ENCODE measurements at regions of chr10 and their contacts with region 1.

Region 1: DNA sequence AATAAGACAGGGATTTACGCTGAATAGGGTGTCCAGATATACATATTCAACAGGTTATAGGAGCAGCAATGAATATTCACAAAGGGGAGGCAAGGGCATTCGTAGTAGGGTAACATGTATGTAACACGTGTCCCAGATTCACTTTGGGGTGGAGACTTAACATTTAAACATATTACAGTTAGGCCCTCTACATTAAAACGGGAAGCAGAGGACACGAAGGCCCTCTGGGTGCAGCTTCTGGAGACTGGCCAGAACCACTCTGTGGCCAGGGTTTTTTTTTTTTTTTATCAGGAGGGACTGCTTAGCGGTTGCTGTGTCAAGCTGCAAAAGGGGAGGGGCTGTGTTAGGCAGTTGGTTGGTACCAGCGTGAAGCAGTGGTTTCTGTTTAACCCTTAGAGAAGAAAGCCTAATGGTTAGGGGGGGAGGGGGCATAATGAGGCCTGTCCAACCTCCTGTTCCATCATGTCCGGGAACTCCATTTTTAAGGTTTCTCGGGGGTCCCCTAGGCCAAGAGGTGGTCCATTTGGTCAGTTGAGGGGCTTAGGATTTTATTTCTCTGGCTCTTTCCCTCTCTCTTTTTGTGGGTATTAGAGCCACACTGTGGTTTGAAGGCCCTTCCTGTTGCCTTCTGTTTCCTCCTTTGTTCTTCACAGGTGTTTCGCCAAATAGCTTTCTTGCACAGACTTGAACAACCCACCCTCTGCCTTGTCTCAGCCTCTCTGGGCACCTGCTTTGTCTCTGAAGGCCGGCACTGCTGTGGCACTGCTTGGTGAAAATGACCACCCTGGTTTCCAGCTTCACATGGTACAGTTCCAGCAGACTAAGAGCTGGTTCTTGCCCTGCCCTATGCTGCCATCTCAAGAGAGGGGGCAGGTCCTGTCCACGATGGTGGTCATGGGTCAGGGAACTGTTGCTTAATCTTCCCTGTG is 26.4 kb downstream of the PRF1 start:
- DNase-seq: peak; percentile 68
- H3K4me3 Mint-ChIP-seq: peak overlapping the region; percentile 33
- H3K27ac Mint-ChIP-seq: peak overlapping the region; percentile 94
- H3K4me1 Mint-ChIP-seq: peaks cover 50% of the 10 kb centered on the region
- H3K27me3 Mint-ChIP-seq: no peaks in the 10 kb centered on the region

Region 2: GRCh38 chr10:70296406-70296899 is 279.7 kb before region 1 on chr10:
- intact Hi-C with region 1: no loop called
- DNase-seq: no peak
- H3K4me3 Mint-ChIP-seq: no peak overlapping the region
- H3K27ac Mint-ChIP-seq: no peak overlapping the region
- H3K4me1 Mint-ChIP-seq: peaks cover 1% of the 10 kb centered on the region
- H3K27me3 Mint-ChIP-seq: no peaks in the 10 kb centered on the region

Region 3: DNA sequence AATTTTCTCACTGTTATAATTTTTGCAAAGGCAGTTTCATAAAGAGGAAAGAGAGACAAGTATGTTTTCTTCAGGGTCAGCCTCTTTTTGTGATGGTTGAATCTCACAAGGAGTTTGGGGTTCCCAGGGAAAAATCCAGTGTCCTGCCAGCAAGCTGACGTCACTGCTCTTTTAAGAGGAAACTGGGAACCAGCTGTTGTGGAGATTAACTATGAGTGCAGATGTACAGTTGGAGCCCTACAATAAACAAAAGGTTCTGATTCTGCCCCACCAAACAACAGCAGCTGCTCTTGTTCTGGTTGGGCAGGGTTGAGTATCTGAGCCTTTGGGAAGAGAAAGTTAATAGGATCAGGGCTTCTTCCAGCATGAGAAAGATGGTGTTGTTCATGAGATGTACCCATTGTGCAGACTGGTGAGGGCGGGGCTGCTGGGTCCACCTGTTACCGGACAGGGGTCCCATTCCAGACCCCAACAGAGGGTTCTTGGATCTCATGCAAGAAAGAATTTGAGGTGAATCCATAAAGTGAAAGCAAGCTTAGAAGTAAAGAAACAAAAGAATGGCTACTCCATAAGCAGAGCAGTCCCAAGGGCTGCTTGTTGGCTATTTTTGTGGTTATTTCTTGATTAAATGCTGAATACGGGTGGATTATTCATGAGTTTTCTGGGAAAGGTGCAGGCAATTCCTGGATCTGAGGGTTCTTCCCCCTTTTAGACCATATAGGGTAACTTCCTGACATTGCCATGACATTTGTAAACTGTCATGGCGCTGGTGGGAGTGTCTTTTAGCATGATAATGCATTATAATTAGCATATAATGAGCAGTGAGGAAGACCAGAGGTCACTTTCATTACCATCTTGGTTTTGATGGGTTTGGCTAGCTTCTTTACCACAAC is 13.9 kb after region 1 on chr10:
- intact Hi-C with region 1: loop called (anchors 1 kb)
- DNase-seq: no peak
- H3K4me3 Mint-ChIP-seq: no peak overlapping the region
- H3K27ac Mint-ChIP-seq: no peak overlapping the region
- H3K4me1 Mint-ChIP-seq: peaks cover 44% of the 10 kb centered on the region
- H3K27me3 Mint-ChIP-seq: peaks cover 6% of the 10 kb centered on the region

Region 4: GRCh38 chr10:70613941-70614340 is 37.8 kb after region 1 on chr10:
- intact Hi-C with region 1: loop called (anchors 1 kb)
- DNase-seq: no peak
- H3K4me3 Mint-ChIP-seq: no peak overlapping the region
- H3K27ac Mint-ChIP-seq: peak overlapping the region; percentile 71
- H3K4me1 Mint-ChIP-seq: peaks cover 53% of the 10 kb centered on the region
- H3K27me3 Mint-ChIP-seq: no peaks in the 10 kb centered on the region

Region 5: GRCh38 chr10:70656489-70656888 is 80.4 kb after region 1 on chr10:
- intact Hi-C with region 1: loop called (anchors 1 kb)
- DNase-seq: peak; percentile 76
- H3K4me3 Mint-ChIP-seq: peak overlapping the region; percentile 55
- H3K27ac Mint-ChIP-seq: peak overlapping the region; percentile 77
- H3K4me1 Mint-ChIP-seq: peaks cover 18% of the 10 kb centered on the region
- H3K27me3 Mint-ChIP-seq: peaks cover 14% of the 10 kb centered on the region

Region 6: DNA sequence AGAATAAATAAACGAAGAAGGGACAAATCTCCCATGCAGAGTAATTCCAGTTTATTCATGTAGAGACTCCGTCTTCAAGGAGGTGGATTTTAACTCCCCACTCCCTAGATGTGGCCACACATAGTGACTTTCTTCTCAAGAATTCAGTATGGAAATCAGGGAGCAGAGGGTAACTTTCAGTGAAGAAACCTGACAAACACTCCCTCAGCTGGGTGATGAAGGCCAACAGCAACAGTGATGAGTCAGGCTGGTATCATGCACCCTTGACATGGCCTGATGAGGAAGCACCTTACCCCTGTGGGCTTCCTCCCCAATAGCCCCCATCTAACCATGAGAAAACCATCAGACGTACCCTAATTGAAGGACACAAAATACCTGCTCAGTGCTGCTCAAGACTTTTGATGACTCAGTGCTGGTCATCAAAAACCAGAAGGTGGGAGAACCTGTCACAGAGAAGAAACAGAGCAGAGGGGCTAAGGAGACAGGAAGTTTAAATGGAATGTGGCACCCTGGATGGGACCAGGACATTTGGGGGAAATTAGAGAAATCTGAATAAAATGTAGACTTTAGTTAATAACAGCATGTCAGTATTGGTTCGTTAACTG is 146.8 kb after region 1 on chr10:
- intact Hi-C with region 1: no loop called
- DNase-seq: no peak
- H3K4me3 Mint-ChIP-seq: no peak overlapping the region
- H3K27ac Mint-ChIP-seq: no peak overlapping the region
- H3K4me1 Mint-ChIP-seq: no peaks in the 10 kb centered on the region
- H3K27me3 Mint-ChIP-seq: peaks cover 3% of the 10 kb centered on the region

Region 7: DNA sequence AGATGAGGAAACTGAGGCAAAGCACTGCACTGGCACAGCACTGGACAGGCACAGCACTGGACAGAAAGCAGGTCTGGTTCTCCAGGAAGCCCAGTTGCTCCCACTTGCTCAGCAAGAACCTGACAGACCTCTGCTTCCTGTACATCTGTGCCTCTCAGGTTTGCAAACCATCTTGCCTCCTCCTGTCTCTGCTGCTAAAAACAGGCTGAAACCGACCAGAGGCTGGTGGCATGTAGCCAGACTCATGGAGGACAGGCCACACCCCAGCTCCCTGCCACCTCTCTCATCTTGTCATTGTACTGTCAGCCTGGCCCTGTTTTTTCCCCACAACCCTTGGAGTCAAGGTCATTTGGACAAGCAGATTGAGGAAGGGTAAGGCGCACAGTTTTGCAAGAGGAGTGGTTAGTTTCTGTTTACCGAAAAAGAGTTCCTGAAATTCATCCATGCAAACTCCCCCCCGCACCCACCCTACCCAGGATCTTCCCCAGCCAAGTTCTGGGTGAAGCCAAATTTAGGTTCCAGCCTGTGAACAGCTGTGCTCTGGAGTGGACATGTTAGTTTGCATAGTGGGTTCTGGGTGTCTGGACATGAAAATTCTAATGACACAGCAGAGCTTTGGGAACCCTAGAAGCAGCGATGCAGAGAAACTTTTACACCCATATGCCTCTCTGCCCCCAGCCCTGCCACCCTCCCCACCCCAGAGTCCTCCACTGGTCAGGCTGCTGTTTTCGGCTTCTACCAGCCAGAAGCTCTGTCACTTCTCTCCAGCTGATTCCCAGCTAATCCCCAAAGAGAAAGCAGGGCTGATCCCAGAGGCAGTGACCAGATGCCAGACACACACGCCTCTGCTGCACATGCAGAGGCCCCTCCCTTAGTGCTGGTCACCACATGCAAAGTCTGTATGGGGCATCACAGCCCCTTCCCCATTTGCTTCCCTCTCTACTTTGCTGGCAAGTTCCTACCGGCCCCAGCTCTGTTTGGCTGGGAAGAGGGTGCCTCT is 1151.9 kb after region 1 on chr10:
- intact Hi-C with region 1: loop called (anchors 10 kb)
- DNase-seq: peak; percentile 86
- H3K4me3 Mint-ChIP-seq: peak overlapping the region; percentile 78
- H3K27ac Mint-ChIP-seq: peak overlapping the region; percentile 98
- H3K4me1 Mint-ChIP-seq: peaks cover 69% of the 10 kb centered on the region
- H3K27me3 Mint-ChIP-seq: no peaks in the 10 kb centered on the region